Lower lobe of right lung (tissue), 2 donors: ENCODE measurements at regions of chr11 and their contacts with region 1.

Region 1: DNA sequence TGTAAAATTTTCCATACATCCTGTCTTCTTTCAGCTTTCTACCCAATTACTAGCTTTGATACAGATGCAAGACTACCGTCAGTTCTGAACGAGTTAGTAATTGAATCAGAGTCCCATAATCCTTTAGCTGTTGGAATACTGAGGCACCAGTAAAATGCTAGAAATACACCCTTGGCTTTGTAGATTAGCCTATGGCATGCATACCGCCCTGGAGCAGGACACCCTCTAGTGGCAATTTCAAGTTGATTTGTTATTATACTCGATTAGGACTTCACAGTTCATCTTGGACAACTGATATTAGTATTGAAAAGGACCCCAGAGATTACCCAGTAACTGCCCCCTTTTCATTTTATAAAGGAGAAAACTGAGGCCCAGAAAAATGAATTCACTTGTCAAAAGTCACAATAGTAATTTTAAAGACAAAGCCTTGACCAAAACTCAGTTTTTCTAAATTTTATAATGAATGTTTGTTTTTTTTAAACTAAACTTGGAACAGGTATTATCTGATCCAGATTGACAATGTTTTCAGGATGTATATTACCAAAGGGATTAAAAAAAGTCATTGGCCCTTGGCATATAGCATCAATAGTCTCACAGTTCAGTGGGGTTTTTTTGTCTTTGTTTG is 72.6 kb downstream of the HIPK3 start:
- DNase-seq: no peak
- ATAC-seq: peak; percentile 81 to 83
- H3K4me3 ChIP-seq: no peak overlapping the region
- H3K27ac ChIP-seq: no peak overlapping the region
- H3K4me1 ChIP-seq: peaks cover 42% of the 10 kb centered on the region
- H3K27me3 ChIP-seq: no peaks in the 10 kb centered on the region
- CTCF ChIP-seq: peak; percentile 53

Region 2: DNA sequence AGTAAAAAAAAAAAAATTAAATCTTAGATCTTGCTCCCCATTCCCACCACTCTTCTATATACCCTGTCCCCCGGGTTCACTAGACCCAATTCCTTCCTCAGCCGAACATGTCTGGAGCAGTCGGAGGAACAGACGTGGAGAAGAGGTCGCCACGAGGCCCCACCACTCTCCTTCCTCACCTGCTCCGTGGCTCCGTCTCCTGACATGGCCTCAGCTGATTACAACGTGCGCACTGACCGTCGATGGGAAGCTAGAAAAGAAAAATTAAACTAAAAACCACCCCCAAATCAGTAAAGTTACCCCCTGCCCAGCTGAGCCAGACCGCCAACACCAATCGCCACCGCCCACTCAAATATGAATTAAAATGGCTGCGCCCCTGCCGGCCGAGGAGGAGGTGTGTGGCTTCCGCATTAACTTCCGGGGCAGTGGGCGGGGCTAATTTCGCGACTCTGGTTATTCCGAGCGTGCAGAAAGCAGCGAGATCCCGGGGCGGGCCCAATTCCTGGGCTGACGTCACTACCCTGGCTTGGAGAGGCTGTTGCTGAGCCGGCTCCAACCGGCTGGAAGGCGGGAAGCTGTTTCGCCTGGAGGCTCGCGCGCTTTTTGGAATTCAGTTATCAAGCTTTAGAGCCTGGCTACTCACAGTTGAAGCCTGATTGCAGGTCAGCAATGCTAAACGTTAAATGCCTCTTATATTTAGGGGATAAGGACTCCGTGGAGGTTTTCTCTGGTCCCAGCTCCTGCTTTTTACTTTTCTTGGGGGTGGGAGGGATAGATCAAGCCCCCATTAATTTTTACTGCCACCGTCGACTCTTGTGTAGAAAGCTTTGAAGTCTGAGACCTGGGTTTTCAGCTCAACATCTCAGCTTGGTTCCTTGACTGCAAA is 168.5 kb before region 1 on chr11 and contains the start of gene CSTF3:
- intact Hi-C with region 1: loop called (anchors 10 kb)
- DNase-seq: peak; percentile 100
- ATAC-seq: peak; percentile 99
- H3K4me3 ChIP-seq: peak within 1 kb of the TSS; percentile 82
- H3K27ac ChIP-seq: peak within 1 kb of the TSS; percentile 83
- H3K4me1 ChIP-seq: peaks cover 37% of the 10 kb centered on the region
- H3K27me3 ChIP-seq: no peaks in the 10 kb centered on the region
- CTCF ChIP-seq: peak; percentile 53
- total RNA-seq, gene CSTF3: 20.4 TPM